WTC11 (cell line): ENCODE measurements at regions of chr22 and their contacts with region 1.

Region 1: DNA sequence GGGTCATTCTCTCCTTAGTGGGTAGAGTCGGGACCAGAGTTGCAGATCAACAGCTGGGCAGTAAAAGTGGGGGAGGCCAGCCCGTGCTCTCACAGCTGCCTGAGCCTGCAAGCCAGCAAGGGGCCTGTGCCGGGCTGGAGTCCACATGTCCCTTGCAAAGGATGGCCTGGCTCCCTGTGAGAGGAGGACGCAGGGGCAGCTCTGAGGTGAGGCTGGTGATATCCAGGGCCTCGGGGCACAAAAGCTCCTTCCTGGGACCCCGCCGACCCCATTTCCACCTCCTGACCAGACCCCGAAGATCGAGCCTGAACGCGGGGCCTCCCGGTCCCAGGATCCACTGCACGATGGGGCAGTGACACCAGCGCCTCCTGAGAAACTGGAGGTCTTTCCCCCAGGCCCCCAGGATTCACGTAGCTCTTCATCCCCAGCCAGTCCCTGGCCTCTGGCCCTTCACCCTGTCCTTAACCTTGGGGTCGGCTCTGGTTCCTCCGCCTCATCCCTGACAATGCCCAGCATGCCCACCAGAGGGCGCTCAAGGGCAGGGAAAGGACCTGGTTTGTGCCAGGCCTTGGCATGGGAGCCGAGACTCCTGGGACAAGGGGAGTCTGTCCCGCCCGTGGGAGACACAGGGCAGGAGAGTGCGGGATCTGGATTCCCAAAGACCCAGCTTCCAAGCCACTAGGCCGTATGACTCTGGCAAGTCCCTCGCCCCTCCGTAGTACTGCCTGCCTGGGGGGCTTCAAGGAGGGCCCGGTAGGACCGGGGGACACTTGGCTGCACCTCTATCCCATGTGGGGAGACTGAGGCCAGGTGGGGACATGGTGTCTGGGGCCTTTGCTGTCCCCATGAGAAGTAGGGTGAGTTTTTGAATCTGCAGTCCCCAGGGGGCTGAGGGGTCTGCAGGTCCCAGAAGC is 17.8 kb upstream of the WNT7B start:
- DNase-seq: peak; percentile 95
- ATAC-seq: peak; percentile 89
- H3K4me3 Mint-ChIP-seq: no peak overlapping the region
- H3K27ac Mint-ChIP-seq: no peak overlapping the region
- H3K4me1 Mint-ChIP-seq: peaks cover 2% of the 10 kb centered on the region; the same call in 1 of the 2 replicates
- H3K27me3 Mint-ChIP-seq: no peaks in the 10 kb centered on the region; the same call in 1 of the 2 replicates
- CTCF ChIP-seq: peak; percentile 96

Region 2: DNA sequence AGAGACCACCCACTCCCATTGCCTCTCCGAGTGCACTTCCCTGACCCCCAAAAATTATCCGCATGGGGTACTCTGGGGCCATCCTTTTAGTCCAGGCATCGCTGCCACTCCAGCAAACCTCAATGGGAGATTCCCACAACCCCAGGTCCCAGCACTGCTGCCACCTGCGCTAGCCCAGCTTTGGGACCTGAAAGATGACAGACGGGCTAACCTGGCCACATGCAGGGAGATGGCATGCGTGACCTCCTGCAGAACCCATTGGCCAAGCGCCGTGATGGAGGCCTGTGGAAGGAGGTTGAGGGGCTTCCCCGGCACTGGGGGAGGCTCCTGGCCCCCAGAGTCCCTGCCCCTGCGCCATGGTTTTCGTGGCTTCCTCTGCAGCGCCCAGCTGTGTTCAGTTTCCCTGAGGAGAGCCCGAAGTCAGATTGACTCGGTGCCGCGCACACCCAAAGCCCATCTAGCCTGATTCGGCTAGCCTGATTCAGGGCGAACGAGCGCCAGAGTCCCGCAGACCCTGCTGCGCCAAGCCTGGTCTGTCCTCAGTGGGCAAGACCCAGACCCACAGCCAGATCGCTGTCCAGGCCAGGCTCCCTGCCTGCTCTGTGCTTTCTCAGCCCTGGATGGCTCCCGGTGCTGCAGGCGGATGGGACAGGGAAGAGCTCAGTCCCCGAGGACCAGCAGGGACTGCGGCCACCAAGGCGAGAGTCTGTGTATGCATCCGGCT is 17.0 kb before region 1 on chr22:
- CTCF ChIA-PET with region 1: no interaction called
- POLR2A ChIA-PET with region 1: no interaction called
- DNase-seq: peak; percentile 41
- ATAC-seq: peak; percentile 5; the same call in 1 of the 2 replicates
- H3K4me3 Mint-ChIP-seq: peak overlapping the region; percentile 68
- H3K27ac Mint-ChIP-seq: no peak overlapping the region
- H3K4me1 Mint-ChIP-seq: peaks cover 11% of the 10 kb centered on the region
- H3K27me3 Mint-ChIP-seq: peaks cover 52% of the 10 kb centered on the region
- CTCF ChIP-seq: no peak

Region 3: DNA sequence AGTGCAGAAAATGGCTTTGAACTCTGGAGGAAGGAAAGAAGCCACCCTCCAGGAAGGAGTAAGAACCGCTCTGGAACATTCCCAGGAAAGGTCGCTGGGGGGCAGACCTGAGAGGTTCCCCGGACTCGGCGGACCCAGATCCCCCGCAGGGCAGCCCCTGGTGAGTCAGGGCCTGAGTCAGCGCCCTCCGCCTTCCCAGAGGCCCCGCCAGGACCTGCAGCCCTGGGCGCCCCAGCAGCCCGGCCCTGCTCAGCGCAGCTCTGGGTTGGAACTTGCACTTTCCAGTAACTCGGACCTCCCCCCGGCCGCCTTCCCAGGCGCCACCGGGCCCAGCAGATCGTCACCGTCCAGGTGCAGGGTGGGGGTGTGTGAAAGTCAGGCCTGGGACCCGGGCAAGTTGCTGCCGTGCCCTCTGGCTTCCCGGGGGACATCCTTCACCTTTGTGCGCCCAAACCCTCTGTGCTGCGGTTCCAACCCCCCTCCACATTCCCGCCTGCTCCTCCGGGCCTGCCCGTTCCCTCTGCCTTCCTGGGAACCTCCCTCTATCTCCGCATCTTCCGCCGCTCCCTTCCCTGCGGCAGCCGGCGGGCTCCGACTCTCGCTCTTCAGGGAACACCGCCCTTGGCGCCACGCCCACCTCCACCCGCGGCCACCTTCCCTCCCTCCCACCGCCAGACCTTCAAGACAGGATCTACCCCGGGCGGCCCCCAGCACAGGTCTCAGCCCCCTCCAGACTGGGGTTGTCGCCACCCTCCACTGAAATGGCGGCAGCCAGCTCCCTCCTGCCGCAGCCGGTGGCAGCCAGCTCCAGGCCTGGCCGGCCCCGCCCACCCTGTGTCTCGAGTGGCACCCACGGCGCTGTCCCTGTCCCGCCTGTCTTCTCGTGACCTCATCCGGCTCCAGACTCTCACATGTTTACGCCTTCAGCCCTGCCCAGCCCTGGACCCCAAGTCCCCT is 19.0 kb after region 1 on chr22:
- CTCF ChIA-PET with region 1: interaction called, 19 read pairs
- POLR2A ChIA-PET with region 1: interaction called, 3 read pairs
- DNase-seq: peak; percentile 89
- ATAC-seq: peak; percentile 79
- H3K4me3 Mint-ChIP-seq: peak overlapping the region; percentile 76
- H3K27ac Mint-ChIP-seq: peak overlapping the region; percentile 65; the same call in 1 of the 2 replicates
- H3K4me1 Mint-ChIP-seq: peaks cover 8% of the 10 kb centered on the region; the same call in 1 of the 2 replicates
- H3K27me3 Mint-ChIP-seq: no peaks in the 10 kb centered on the region
- CTCF ChIP-seq: peak; percentile 66

Region 4: DNA sequence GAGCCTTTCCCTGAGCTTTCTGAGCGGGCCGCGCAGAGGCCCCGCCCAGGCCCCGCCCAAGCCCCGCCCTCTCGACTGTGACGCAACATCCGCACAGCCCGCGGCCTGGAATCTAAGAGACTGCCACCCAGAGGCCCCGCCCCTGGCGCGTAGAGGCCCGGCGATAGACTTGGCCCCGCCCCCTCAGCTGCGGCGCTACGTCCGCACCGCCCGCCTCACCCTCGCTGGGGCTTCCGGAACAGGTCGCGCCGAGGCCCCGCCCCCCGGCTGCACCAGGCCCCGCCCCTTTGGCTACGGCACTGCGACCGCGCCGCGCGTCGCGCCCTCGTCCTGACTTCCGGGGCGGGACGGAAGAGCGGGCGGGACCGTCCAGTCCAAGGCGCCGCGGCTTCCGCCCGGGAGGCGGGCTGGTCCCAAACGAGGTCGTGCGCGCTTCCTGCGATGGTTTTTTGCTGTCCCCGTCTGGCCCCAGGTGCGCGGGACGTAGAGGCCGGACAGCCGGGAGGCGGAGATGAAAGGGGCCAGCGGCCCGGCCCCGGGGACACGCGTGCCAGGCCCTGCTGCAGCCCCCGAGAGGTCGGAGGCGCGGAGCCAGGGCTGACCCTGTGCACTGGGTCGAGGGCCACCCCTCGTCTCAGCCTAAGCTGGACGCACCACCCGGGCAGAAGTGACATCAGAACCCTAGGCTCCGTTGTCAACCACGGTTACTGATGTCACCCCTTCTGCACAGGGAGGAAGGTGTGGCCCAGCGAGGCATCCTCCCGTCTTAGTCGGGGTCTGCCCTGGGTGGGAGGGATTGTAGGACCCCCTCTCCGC is 41.2 kb after region 1 on chr22:
- CTCF ChIA-PET with region 1: interaction called, 14 read pairs
- POLR2A ChIA-PET with region 1: no interaction called
- DNase-seq: peak; percentile 100
- ATAC-seq: peak; percentile 95
- H3K4me3 Mint-ChIP-seq: peak overlapping the region; percentile 73
- H3K27ac Mint-ChIP-seq: no peak overlapping the region
- H3K4me1 Mint-ChIP-seq: peaks cover 34% of the 10 kb centered on the region
- H3K27me3 Mint-ChIP-seq: no peaks in the 10 kb centered on the region
- CTCF ChIP-seq: no peak

Region 5: GRCh38 chr22:46071451-46072109 is 76.8 kb after region 1 on chr22:
- CTCF ChIA-PET with region 1: interaction called, 10 read pairs
- POLR2A ChIA-PET with region 1: interaction called, 6 read pairs
- DNase-seq: peak; percentile 38
- ATAC-seq: peak; percentile 3; the same call in 1 of the 2 replicates
- H3K4me3 Mint-ChIP-seq: peak overlapping the region; percentile 67
- H3K27ac Mint-ChIP-seq: no peak overlapping the region
- H3K4me1 Mint-ChIP-seq: peaks cover 28% of the 10 kb centered on the region
- H3K27me3 Mint-ChIP-seq: peaks cover 67% of the 10 kb centered on the region
- CTCF ChIP-seq: no peak

Region 6: GRCh38 chr22:46079861-46080821 is 85.4 kb after region 1 on chr22:
- CTCF ChIA-PET with region 1: interaction called, 10 read pairs
- POLR2A ChIA-PET with region 1: no interaction called
- DNase-seq: peak; percentile 9
- ATAC-seq: no peak
- H3K4me3 Mint-ChIP-seq: no peak overlapping the region
- H3K27ac Mint-ChIP-seq: no peak overlapping the region
- H3K4me1 Mint-ChIP-seq: peaks cover 30% of the 10 kb centered on the region
- H3K27me3 Mint-ChIP-seq: no peaks in the 10 kb centered on the region
- CTCF ChIP-seq: no peak

Region 7: DNA sequence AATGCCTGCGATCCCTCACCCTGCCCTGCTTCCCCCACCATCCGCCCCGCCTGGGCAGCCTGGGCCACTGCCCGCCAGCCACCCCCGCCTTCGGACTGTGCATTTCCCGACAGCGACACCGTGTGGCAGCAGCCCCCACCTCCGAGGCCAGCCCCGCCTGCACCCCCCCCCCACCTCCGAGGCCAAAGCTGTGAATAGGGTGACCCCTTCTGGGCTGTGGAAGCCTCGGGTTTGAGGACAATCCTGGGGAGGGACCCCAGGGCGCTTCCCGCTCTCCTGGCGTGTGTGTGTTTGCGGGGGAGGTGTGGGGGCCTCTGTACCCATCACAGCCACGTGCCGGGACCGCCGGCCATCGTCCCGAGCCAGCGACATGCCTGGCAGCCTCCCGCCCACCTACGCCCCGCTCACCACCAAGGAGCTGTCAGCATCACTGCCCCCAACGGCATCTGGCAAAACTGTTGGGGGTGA is 121.8 kb after region 1 on chr22:
- CTCF ChIA-PET with region 1: interaction called, 145 read pairs
- POLR2A ChIA-PET with region 1: no interaction called
- DNase-seq: peak; percentile 94
- ATAC-seq: peak; percentile 86
- H3K4me3 Mint-ChIP-seq: no peak overlapping the region
- H3K27ac Mint-ChIP-seq: no peak overlapping the region
- H3K4me1 Mint-ChIP-seq: peaks cover 3% of the 10 kb centered on the region; the same call in 1 of the 2 replicates
- H3K27me3 Mint-ChIP-seq: no peaks in the 10 kb centered on the region
- CTCF ChIP-seq: peak; percentile 49; the same call in 1 of the 2 replicates

Region 8: DNA sequence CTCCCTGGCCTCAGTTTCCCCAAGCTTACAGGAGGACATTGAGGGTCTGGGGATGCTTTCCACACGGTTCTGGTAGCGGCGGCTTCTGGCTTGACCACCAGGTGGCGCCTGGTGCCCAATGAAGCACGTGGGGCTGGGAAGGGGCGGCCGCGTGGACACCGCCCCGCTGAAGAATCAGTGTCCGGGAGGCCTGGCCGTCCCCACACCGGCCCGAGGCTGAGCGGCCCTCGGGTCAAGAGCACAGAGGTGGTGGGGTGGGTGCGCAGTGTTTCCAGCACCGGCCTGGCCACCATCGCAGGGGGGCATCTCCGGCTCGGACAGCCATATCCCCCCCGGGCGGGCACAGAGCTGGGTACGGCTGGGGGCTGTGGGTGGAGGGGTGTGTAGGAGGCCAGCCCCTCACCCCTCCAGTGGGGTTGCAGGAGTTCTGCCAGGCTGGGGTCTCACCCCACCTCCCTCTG is 127.8 kb after region 1 on chr22:
- CTCF ChIA-PET with region 1: interaction called, 145 read pairs
- POLR2A ChIA-PET with region 1: no interaction called
- DNase-seq: peak; percentile 77
- ATAC-seq: peak; percentile 77
- H3K4me3 Mint-ChIP-seq: no peak overlapping the region
- H3K27ac Mint-ChIP-seq: no peak overlapping the region
- H3K4me1 Mint-ChIP-seq: no peaks in the 10 kb centered on the region
- H3K27me3 Mint-ChIP-seq: no peaks in the 10 kb centered on the region
- CTCF ChIP-seq: peak; percentile 90